ENCODE measurements at regions of chr22 and their contacts with region 1.

Region 1: DNA sequence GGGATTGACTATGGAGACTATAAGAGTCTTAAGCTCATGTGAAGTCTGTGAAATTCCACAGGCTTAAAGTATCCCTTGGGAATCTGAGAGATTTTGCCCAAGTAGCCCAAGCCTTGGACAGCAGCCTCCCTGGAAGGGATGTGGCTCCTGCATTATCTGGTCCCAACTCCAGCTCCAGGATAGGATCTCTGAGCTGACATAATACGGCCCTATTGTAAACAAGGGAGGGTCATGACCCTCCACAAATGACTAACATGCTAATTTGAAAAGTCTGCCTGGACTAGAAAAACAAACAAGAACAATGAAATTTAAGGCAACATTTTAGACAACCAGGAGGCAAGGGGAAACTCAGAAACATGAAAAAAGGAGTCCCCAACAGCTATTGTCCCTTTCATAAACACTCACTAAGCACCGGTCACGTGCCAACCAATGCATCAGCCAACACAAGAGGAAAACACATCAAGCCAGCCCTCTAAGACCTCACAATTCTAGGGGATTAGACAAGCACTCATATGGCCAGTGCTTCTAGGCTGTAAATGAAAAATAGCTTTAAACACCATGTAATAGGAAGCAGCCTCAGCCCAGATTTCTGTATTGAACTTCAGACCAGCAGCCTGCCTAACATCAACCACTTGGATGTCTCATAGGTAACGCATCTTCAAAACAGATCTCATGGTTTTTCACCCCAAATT is 101.2 kb upstream of the TIMP3 start:
- DNase-seq: no peak
- H3K4me3 Mint-ChIP-seq: no peak overlapping the region
- H3K27ac Mint-ChIP-seq: peak overlapping the region; percentile 61
- H3K4me1 Mint-ChIP-seq: peaks cover 53% of the 10 kb centered on the region
- H3K27me3 Mint-ChIP-seq: no peaks in the 10 kb centered on the region
- CTCF ChIP-seq: no peak

Region 2: DNA sequence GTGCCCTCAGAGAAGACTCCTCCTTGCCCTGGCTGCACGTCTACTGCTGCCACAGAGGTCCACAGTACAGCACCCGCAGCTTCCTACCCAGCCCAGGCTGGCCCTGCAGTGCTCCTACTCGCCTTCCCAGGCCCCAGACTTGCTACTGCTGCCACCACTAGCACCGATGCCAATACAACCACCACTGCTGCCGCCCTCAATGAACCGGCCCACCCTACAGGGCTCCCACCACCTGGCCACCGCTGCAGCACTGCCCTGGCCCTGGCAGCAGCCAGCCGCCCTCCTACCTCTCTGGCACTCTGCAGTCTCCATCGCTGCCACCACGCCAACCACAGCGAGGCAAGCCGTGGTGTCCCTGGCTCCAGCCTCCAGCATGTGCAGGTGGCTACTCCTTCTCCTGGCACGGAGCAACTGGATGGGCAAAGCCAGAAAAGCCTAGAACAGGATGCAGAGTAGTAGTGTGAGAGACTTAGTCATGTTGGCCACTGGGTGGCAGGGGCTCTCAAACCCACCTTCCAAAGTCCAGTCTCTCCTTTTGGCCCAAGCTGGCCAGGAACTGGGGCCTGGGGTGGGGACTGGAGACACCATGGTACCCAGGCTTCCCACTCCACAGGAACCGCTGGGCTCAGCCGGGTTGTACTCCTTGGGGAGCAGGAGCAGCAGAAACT is 580.6 kb before region 1 on chr22:
- CTCF ChIA-PET with region 1: no interaction called
- POLR2A ChIA-PET with region 1: no interaction called
- intact Hi-C with region 1: no loop called
- DNase-seq: no peak
- H3K4me3 Mint-ChIP-seq: no peak overlapping the region
- H3K27ac Mint-ChIP-seq: no peak overlapping the region
- H3K4me1 Mint-ChIP-seq: no peaks in the 10 kb centered on the region
- H3K27me3 Mint-ChIP-seq: peaks cover 24% of the 10 kb centered on the region
- CTCF ChIP-seq: no peak

Region 3: GRCh38 chr22:32665676-32666075 is 34.7 kb before region 1 on chr22:
- CTCF ChIA-PET with region 1: interaction called, 6 read pairs
- POLR2A ChIA-PET with region 1: interaction called, 13 read pairs
- intact Hi-C with region 1: no loop called
- DNase-seq: peak; percentile 67
- H3K4me3 Mint-ChIP-seq: no peak overlapping the region
- H3K27ac Mint-ChIP-seq: no peak overlapping the region
- H3K4me1 Mint-ChIP-seq: peaks cover 7% of the 10 kb centered on the region
- H3K27me3 Mint-ChIP-seq: no peaks in the 10 kb centered on the region
- CTCF ChIP-seq: no peak

Region 4: GRCh38 chr22:32723643-32724042 is 23.3 kb after region 1 on chr22:
- CTCF ChIA-PET with region 1: interaction called, 4 read pairs
- POLR2A ChIA-PET with region 1: interaction called, 38 read pairs
- intact Hi-C with region 1: no loop called
- DNase-seq: peak; percentile 77
- H3K4me3 Mint-ChIP-seq: no peak overlapping the region
- H3K27ac Mint-ChIP-seq: peak overlapping the region; percentile 71
- H3K4me1 Mint-ChIP-seq: peaks cover 25% of the 10 kb centered on the region
- H3K27me3 Mint-ChIP-seq: no peaks in the 10 kb centered on the region
- CTCF ChIP-seq: no peak

Region 5: DNA sequence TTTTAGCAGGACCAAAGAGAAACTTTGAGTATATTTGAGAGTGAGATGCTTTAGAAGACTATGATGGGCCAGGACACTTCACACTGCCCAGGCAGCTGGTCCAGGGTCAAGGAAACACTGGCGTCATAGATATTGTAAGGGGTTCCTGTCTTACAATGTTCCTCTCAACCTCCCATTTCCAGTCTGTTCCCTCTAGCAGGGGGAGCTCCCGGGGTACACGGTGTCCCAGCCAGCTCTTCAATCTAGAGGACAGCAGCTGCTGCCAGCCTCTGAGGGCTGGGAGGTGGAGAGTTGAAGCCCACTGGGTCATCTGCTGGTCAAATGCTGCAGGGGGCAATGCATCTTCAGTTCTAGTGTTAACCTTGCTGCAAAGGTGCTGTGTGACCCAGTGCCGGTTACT is 60.5 kb after region 1 on chr22:
- CTCF ChIA-PET with region 1: no interaction called
- POLR2A ChIA-PET with region 1: no interaction called
- intact Hi-C with region 1: no loop called
- DNase-seq: no peak
- H3K4me3 Mint-ChIP-seq: no peak overlapping the region
- H3K27ac Mint-ChIP-seq: no peak overlapping the region
- H3K4me1 Mint-ChIP-seq: no peaks in the 10 kb centered on the region
- H3K27me3 Mint-ChIP-seq: no peaks in the 10 kb centered on the region
- CTCF ChIP-seq: no peak

Region 6: GRCh38 chr22:32775957-32776356 is 75.6 kb after region 1 on chr22:
- CTCF ChIA-PET with region 1: no interaction called
- POLR2A ChIA-PET with region 1: no interaction called
- intact Hi-C with region 1: no loop called
- DNase-seq: peak; percentile 29
- H3K4me3 Mint-ChIP-seq: no peak overlapping the region
- H3K27ac Mint-ChIP-seq: no peak overlapping the region
- H3K4me1 Mint-ChIP-seq: peaks cover 11% of the 10 kb centered on the region
- H3K27me3 Mint-ChIP-seq: no peaks in the 10 kb centered on the region
- CTCF ChIP-seq: peak; percentile 23